Sciatic nerve (tissue), 2 donors: ENCODE measurements at regions of chr2 and their contacts with region 1.

Region 1: GRCh38 chr2:150644298-150645067 is 157.0 kb upstream of the RND3 start:
- DNase-seq: no peak
- ATAC-seq: peak; percentile 69

Region 2: DNA sequence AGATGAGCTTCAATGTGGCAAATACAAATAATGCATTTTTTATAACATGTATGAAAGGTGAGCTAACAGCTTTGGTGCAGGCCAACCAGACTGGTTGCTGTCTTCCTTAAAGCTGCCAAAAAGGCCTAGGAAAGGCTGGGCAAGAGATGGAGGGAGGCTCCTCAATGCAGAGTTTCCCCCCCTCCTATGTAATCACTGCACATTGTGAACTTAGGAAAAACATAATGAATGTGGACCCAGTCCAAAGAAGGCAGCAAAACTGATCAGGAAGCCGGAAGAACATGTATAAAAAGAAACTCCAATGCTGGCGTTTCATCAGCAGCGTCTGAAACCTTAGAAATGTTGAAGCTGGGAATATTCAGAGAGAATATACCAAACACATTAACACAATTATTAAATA is 1398.3 kb before region 1 on chr2:
- intact Hi-C with region 1: loop called (anchors 5 kb)
- DNase-seq: no peak
- ATAC-seq: no peak

Region 3: DNA sequence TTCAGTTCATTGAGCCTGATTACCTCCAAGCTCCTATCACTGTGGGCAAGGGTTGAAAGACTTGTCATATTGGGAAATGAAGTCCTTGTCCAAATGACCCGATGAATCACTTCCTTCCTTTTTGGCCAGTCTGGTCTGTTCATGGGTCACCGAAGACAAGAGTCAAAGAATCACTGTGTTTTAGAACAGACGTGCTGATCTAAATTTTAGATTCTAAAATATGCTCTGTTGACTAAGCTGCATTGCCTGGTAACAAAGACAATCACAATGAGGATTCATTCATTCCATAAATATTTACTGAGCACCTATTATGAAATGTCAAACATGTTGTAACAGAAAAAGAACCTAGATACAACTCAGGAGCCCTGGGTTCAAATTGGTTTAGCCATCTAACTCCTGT is 57.6 kb before region 1 on chr2:
- intact Hi-C with region 1: no loop called
- DNase-seq: no peak
- ATAC-seq: peak; percentile 70

Region 4: DNA sequence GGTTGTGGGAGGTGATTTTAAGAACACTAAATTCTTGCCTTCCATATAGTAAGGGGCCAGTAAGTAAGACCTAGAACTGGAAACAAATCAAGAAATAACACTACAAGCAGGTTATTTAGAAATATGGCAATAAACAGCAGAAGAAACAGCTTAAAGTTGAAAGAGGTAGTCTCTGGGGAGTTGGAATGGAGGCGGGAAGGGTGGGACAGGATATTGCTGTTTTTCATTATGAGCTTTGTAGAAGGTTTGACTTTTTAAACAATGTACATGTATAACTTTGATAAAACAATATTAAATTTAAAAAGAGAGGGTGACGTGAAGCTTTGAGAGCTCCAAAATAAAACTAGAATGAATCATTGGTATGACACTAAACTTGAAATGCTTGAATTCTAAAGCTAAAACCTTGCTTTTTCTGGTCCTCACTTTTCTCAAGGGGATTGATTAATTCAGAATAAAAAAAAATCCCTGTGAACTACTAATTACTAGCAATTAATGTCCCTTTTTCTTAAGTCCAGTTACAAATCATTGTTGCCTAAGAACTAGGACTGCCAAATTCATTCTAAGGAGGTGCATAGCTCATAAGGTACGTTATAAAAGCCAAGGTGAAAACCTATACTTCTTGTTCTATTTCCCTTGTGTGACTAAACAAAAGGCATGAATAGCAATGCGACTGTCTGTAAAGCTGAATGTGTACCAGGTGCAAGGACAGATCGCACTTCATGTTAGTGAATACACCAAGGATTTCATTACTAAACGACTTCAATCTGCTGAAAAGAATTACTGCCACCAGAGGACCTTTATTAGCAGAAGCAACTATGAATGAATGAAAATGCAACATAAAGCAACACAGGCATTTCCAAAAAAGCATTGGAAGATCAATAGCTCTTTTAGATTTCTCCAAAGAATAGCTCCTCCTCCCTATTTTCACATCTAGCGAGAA is 439.6 kb after region 1 on chr2:
- intact Hi-C with region 1: no loop called
- DNase-seq: no peak
- ATAC-seq: no peak